Caco-2 (cell line): ENCODE measurements at regions of chr5 and their contacts with region 1.

Region 1: DNA sequence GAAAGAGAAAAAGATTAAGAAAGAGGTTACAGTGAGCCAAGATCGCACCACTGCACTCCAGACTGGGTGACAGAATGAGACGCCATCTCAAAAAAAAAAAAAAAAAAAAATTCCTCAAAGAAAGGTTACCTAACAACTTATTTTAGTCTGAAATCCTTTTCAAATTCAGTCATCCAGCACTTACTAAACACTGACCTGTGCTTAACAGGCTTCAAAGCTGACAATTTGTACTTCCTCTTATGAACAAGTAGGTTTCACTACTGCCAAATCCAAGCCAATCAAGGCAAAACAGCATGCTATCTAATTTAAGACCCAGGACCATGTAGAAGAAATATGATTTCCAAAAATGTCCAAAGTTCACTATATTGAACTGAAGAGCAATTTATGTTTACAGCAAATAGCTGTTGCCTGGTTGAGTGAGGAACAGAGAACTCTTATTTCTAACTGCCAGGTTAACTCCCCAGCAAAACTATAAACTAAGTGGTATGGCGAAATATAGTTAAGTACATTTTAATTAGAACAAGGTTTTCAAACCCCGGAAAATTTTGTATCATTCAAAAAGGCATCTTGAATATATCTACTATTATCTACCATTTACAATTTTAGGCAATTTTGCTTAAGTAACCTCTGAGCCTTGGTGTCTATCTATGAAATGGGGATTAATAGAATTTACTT is 13.4 kb downstream of the PWWP2A start:
- DNase-seq: no peak
- H3K4me3 ChIP-seq: no peak overlapping the region
- H3K4me3 Mint-ChIP-seq: no peak overlapping the region
- H3K27ac Mint-ChIP-seq: no peak overlapping the region
- H3K4me1 ChIP-seq: no peaks in the 10 kb centered on the region
- H3K4me1 Mint-ChIP-seq: no peaks in the 10 kb centered on the region
- H3K27me3 ChIP-seq: no peaks in the 10 kb centered on the region
- H3K27me3 Mint-ChIP-seq: no peaks in the 10 kb centered on the region
- CTCF ChIP-seq: no peak

Region 2: GRCh38 chr5:160082614-160083500 is 23.0 kb before region 1 on chr5:
- CTCF ChIA-PET with region 1: no interaction called
- POLR2A ChIA-PET with region 1: no interaction called
- intact Hi-C with region 1: no loop called
- DNase-seq: no peak
- H3K4me3 ChIP-seq: no peak overlapping the region
- H3K4me3 Mint-ChIP-seq: no peak overlapping the region
- H3K27ac Mint-ChIP-seq: no peak overlapping the region
- H3K4me1 ChIP-seq: peaks cover 34% of the 10 kb centered on the region
- H3K4me1 Mint-ChIP-seq: peaks cover 25% of the 10 kb centered on the region
- H3K27me3 ChIP-seq: no peaks in the 10 kb centered on the region
- H3K27me3 Mint-ChIP-seq: no peaks in the 10 kb centered on the region
- CTCF ChIP-seq: no peak

Region 3: GRCh38 chr5:160159991-160160792 is 54.4 kb after region 1 on chr5:
- CTCF ChIA-PET with region 1: no interaction called
- POLR2A ChIA-PET with region 1: interaction called, 16 read pairs
- intact Hi-C with region 1: no loop called
- DNase-seq: peak; percentile 83 to 90
- H3K4me3 ChIP-seq: no peak overlapping the region
- H3K4me3 Mint-ChIP-seq: peak overlapping the region; percentile 25
- H3K27ac Mint-ChIP-seq: peak overlapping the region; percentile 87
- H3K4me1 ChIP-seq: peaks cover 36% of the 10 kb centered on the region
- H3K4me1 Mint-ChIP-seq: peaks cover 22% of the 10 kb centered on the region
- H3K27me3 ChIP-seq: no peaks in the 10 kb centered on the region
- H3K27me3 Mint-ChIP-seq: no peaks in the 10 kb centered on the region
- CTCF ChIP-seq: no peak